ENCODE measurements at regions of chr12 and their contacts with region 1.

Region 1: GRCh38 chr12:65232476-65233077 is 45.9 kb upstream of the MSRB3 start:
- DNase-seq: peak; percentile 62
- H3K4me3 ChIP-seq: no peak overlapping the region
- H3K27ac ChIP-seq: no peak overlapping the region
- H3K4me1 ChIP-seq: peaks cover 3% of the 10 kb centered on the region
- H3K27me3 ChIP-seq: no peaks in the 10 kb centered on the region
- CTCF ChIP-seq: peak in 1 of 2 donors; percentile 12
- POLR2A ChIP-seq: no peak

Region 2: GRCh38 chr12:64600189-64600588 is 632.4 kb before region 1 on chr12:
- CTCF ChIA-PET with region 1: no interaction called
- POLR2A ChIA-PET with region 1: no interaction called
- dilution Hi-C with region 1: no loop called
- intact Hi-C with region 1: no loop called
- DNase-seq: no peak
- H3K4me3 ChIP-seq: no peak overlapping the region
- H3K27ac ChIP-seq: no peak overlapping the region
- H3K4me1 ChIP-seq: no peaks in the 10 kb centered on the region
- H3K27me3 ChIP-seq: no peaks in the 10 kb centered on the region
- CTCF ChIP-seq: no peak
- POLR2A ChIP-seq: no peak

Region 3: GRCh38 chr12:64890873-64891468 is 341.6 kb before region 1 on chr12:
- CTCF ChIA-PET with region 1: interaction called, 77 read pairs
- POLR2A ChIA-PET with region 1: no interaction called
- dilution Hi-C with region 1: no loop called
- intact Hi-C with region 1: loop called (anchors 1 kb)
- DNase-seq: peak; percentile 67
- H3K4me3 ChIP-seq: no peak overlapping the region
- H3K27ac ChIP-seq: no peak overlapping the region
- H3K4me1 ChIP-seq: peaks cover 36% of the 10 kb centered on the region
- H3K27me3 ChIP-seq: no peaks in the 10 kb centered on the region
- CTCF ChIP-seq: peak; percentile 35 to 53
- POLR2A ChIP-seq: no peak

Region 4: GRCh38 chr12:65121049-65121955 is 111.3 kb before region 1 on chr12 and contains the start of gene WIF1:
- CTCF ChIA-PET with region 1: interaction called, 9 read pairs
- POLR2A ChIA-PET with region 1: no interaction called
- dilution Hi-C with region 1: no loop called
- intact Hi-C with region 1: loop called (anchors 1 kb)
- DNase-seq: peak; percentile 22
- H3K4me3 ChIP-seq: peak within 1 kb of the TSS; percentile 12 to 21 (median 13)
- H3K27ac ChIP-seq: no peak within 1 kb of the TSS
- H3K4me1 ChIP-seq: peaks cover 2% of the 10 kb centered on the region
- H3K27me3 ChIP-seq: peaks cover 36 to 67% of the 10 kb centered on the region in 2 experiments
- CTCF ChIP-seq: peak; percentile 59 to 69
- POLR2A ChIP-seq: no peak
- total RNA-seq, gene WIF1: not detected in 2 replicates

Region 5: DNA sequence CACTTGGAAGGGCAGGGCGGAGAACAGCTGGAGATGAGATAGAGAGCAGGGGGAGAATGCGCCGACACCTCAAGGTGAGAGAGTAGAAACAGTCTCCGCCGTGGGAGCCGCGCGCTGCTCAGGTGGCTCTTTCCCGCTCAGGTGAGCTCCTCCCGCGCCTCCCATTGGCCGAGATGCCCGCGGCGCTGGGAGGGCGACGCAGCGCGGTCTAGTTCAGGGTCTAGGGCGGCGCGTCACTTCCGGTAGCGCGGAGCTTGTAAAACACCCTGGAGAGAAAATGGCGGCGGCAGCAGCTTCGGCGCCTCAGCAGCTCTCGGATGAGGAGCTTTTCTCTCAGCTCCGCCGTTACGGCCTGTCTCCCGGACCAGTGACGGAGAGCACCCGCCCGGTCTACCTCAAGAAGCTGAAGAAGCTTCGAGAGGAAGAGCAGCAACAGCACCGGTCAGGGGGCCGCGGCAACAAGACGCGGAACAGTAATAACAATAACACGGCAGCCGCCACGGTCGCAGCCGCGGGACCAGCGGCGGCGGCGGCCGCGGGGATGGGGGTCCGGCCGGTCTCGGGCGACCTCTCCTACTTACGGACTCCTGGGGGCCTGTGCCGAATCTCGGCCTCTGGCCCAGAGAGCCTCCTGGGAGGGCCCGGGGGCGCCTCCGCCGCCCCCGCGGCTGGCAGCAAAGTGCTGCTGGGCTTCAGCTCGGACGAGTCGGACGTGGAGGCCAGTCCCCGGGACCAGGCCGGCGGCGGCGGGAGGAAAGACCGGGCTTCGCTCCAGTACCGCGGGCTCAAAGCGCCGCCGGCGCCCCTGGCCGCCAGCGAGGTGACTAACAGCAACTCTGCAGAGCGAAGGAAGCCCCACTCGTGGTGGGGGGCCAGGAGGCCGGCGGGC is 63.0 kb before region 1 on chr12 and contains the start of gene LEMD3:
- CTCF ChIA-PET with region 1: interaction called, 91 read pairs
- POLR2A ChIA-PET with region 1: interaction called, 3 read pairs
- dilution Hi-C with region 1: no loop called
- intact Hi-C with region 1: loop called (anchors 1 kb)
- DNase-seq: peak; percentile 88
- H3K4me3 ChIP-seq: peak within 1 kb of the TSS; percentile 77 to 97 (median 97)
- H3K27ac ChIP-seq: peak within 1 kb of the TSS; percentile 98
- H3K4me1 ChIP-seq: peaks cover 33% of the 10 kb centered on the region
- H3K27me3 ChIP-seq: no peaks in the 10 kb centered on the region
- CTCF ChIP-seq: no peak
- POLR2A ChIP-seq: peak; percentile 93
- total RNA-seq, gene LEMD3: 24.2 and 29.0 TPM in 2 replicates

Region 6: GRCh38 chr12:65195387-65196055 is 37.1 kb before region 1 on chr12:
- CTCF ChIA-PET with region 1: interaction called, 12 read pairs
- POLR2A ChIA-PET with region 1: no interaction called
- dilution Hi-C with region 1: no loop called
- intact Hi-C with region 1: no loop called
- DNase-seq: no peak
- H3K4me3 ChIP-seq: no peak overlapping the region
- H3K27ac ChIP-seq: no peak overlapping the region
- H3K4me1 ChIP-seq: peaks cover 4% of the 10 kb centered on the region
- H3K27me3 ChIP-seq: no peaks in the 10 kb centered on the region
- CTCF ChIP-seq: no peak
- POLR2A ChIP-seq: no peak

Region 7: DNA sequence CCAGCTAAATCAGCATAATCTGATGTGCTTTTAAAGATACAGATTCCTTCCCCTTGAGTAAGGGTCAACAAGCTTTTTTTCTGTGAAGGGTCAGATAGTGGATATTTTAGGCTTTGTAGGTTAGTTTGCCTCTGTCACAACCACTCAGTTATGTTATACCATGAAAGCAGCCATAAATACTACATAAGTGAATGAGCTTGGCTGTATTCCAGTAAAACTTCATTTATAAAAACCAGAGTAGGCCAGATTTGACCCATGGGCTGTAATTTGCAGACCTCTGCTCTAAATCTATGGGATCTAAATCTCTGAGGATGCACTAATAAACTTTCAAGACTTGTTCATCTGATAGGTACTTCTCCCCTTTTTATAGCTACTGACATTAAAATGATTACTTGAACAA is 15.5 kb before region 1 on chr12:
- CTCF ChIA-PET with region 1: interaction called, 33 read pairs
- POLR2A ChIA-PET with region 1: no interaction called
- dilution Hi-C with region 1: no loop called
- intact Hi-C with region 1: no loop called
- DNase-seq: no peak
- H3K4me3 ChIP-seq: no peak overlapping the region
- H3K27ac ChIP-seq: no peak overlapping the region
- H3K4me1 ChIP-seq: no peaks in the 10 kb centered on the region
- H3K27me3 ChIP-seq: no peaks in the 10 kb centered on the region
- CTCF ChIP-seq: no peak
- POLR2A ChIP-seq: no peak

Region 8: GRCh38 chr12:65364046-65364445 is 131.5 kb after region 1 on chr12:
- CTCF ChIA-PET with region 1: no interaction called
- POLR2A ChIA-PET with region 1: no interaction called
- dilution Hi-C with region 1: no loop called
- intact Hi-C with region 1: no loop called
- DNase-seq: no peak
- H3K4me3 ChIP-seq: no peak overlapping the region
- H3K27ac ChIP-seq: no peak overlapping the region
- H3K4me1 ChIP-seq: no peaks in the 10 kb centered on the region
- H3K27me3 ChIP-seq: no peaks in the 10 kb centered on the region
- CTCF ChIP-seq: no peak
- POLR2A ChIP-seq: no peak